Activated B cell treated with CpG ODN at 0.5 μM for 24 hours (primary cell): ENCODE measurements at regions of chr4 and their contacts with region 1.

Region 1: GRCh38 chr4:109702950-109703663 is at the start of gene CASP6:
- DNase-seq: peak; percentile 66
- ATAC-seq: peak; percentile 83
- H3K4me3 Mint-ChIP-seq: peak within 1 kb of the TSS; percentile 93
- H3K27ac Mint-ChIP-seq: peak within 1 kb of the TSS; percentile 76
- H3K4me1 Mint-ChIP-seq: peaks cover 20% of the 10 kb centered on the region
- H3K27me3 Mint-ChIP-seq: no peaks in the 10 kb centered on the region
- CTCF ChIP-seq: no peak
- total RNA-seq, gene CASP6: 5.6 and 7.0 TPM in 2 replicates

Region 2: GRCh38 chr4:108794136-108794535 is 909.0 kb before region 1 on chr4:
- CTCF ChIA-PET with region 1: no interaction called
- POLR2A ChIA-PET with region 1: no interaction called
- intact Hi-C with region 1: no loop called
- DNase-seq: no peak
- ATAC-seq: no peak
- H3K4me3 Mint-ChIP-seq: no peak overlapping the region
- H3K27ac Mint-ChIP-seq: no peak overlapping the region
- H3K4me1 Mint-ChIP-seq: no peaks in the 10 kb centered on the region
- H3K27me3 Mint-ChIP-seq: peaks cover 3% of the 10 kb centered on the region
- CTCF ChIP-seq: no peak

Region 3: DNA sequence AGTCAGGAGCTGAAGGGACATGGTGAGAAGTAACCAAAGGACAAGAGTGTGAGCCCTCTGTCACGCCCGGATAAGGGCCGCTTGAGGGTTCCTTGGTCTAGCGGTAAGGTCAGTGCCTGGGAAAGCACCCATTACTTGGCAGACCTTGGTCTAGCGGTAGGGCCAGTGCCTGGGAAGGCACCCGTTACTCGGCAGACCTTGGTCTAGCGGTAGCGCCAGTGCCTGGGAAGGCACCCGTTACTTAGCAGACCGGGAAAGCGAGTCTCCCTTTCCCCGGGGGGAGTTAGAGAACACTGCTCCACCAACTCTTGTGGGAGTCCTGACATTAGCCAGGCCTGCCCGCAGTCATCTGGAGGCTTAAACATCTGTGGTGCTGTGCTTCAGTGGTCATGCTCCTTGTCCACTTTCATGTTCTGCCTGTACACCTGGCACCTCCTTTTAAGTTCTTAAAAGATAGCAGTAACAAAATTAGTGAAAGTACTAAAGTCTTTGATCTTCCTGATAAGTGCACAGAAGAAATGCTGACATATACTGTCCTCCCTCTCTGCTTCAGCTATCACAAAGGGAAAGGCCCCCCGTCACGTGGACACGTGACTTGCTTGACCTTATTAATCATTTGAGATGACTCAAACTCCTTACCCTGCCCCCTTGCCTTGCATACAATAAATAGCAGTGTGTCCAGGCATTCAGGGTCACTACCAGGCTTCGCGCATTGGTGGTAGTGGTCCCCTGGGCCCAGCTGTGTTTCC is 278.8 kb before region 1 on chr4:
- CTCF ChIA-PET with region 1: no interaction called
- POLR2A ChIA-PET with region 1: no interaction called
- intact Hi-C with region 1: loop called (anchors 2 kb)
- DNase-seq: no peak
- ATAC-seq: no peak
- H3K4me3 Mint-ChIP-seq: no peak overlapping the region
- H3K27ac Mint-ChIP-seq: no peak overlapping the region
- H3K4me1 Mint-ChIP-seq: no peaks in the 10 kb centered on the region
- H3K27me3 Mint-ChIP-seq: no peaks in the 10 kb centered on the region
- CTCF ChIP-seq: no peak

Region 4: GRCh38 chr4:109648266-109648996 is 54.7 kb before region 1 on chr4:
- CTCF ChIA-PET with region 1: no interaction called
- POLR2A ChIA-PET with region 1: no interaction called
- intact Hi-C with region 1: loop called (anchors 5 kb)
- DNase-seq: no peak
- ATAC-seq: peak; percentile 48
- H3K4me3 Mint-ChIP-seq: peak overlapping the region; percentile 39
- H3K27ac Mint-ChIP-seq: peak overlapping the region; percentile 74
- H3K4me1 Mint-ChIP-seq: peaks cover 35% of the 10 kb centered on the region
- H3K27me3 Mint-ChIP-seq: no peaks in the 10 kb centered on the region
- CTCF ChIP-seq: no peak

Region 5: GRCh38 chr4:109815151-109816081 is 112.3 kb after region 1 on chr4 and contains the start of gene GAR1:
- CTCF ChIA-PET with region 1: no interaction called
- POLR2A ChIA-PET with region 1: no interaction called
- intact Hi-C with region 1: loop called (anchors 1 kb)
- DNase-seq: peak; percentile 70
- ATAC-seq: peak; percentile 97
- H3K4me3 Mint-ChIP-seq: peak within 1 kb of the TSS; percentile 94
- H3K27ac Mint-ChIP-seq: peak within 1 kb of the TSS; percentile 93
- H3K4me1 Mint-ChIP-seq: peaks cover 28% of the 10 kb centered on the region
- H3K27me3 Mint-ChIP-seq: no peaks in the 10 kb centered on the region
- CTCF ChIP-seq: no peak
- total RNA-seq, gene GAR1: 21.0 and 23.1 TPM in 2 replicates

Region 6: GRCh38 chr4:109990261-109991257 is 287.5 kb after region 1 on chr4:
- CTCF ChIA-PET with region 1: no interaction called
- POLR2A ChIA-PET with region 1: no interaction called
- intact Hi-C with region 1: loop called (anchors 5 kb)
- DNase-seq: no peak
- ATAC-seq: peak; percentile 80
- H3K4me3 Mint-ChIP-seq: no peak overlapping the region
- H3K27ac Mint-ChIP-seq: peak overlapping the region; percentile 74
- H3K4me1 Mint-ChIP-seq: peaks cover 26% of the 10 kb centered on the region
- H3K27me3 Mint-ChIP-seq: no peaks in the 10 kb centered on the region
- CTCF ChIP-seq: no peak